Heart left ventricle (tissue), 16 donors: ENCODE measurements at regions of chr10 and their contacts with region 1.

Region 1: GRCh38 chr10:32445740-32446535 is at the start of gene CCDC7:
- DNase-seq: peak; percentile 87 to 93 (median 89)
- ATAC-seq: peak; percentile 92 to 99 (median 98)
- H3K4me3 ChIP-seq: peak within 1 kb of the TSS; percentile 43 to 91 (median 70)
- H3K27ac ChIP-seq: peak within 1 kb of the TSS; percentile 89 to 99 (median 96)
- H3K4me1 ChIP-seq: peaks cover 0 to 17% (median 2%) of the 10 kb centered on the region in 12 donors
- H3K27me3 ChIP-seq: no peaks in the 10 kb centered on the region
- CTCF ChIP-seq: peak; percentile 31 to 83 (median 62)
- POLR2A ChIP-seq: peak in 1 of 2 donors; percentile 62
- total RNA-seq, gene CCDC7: 6.6 to 41.3 (median 24.9) TPM

Region 2: DNA sequence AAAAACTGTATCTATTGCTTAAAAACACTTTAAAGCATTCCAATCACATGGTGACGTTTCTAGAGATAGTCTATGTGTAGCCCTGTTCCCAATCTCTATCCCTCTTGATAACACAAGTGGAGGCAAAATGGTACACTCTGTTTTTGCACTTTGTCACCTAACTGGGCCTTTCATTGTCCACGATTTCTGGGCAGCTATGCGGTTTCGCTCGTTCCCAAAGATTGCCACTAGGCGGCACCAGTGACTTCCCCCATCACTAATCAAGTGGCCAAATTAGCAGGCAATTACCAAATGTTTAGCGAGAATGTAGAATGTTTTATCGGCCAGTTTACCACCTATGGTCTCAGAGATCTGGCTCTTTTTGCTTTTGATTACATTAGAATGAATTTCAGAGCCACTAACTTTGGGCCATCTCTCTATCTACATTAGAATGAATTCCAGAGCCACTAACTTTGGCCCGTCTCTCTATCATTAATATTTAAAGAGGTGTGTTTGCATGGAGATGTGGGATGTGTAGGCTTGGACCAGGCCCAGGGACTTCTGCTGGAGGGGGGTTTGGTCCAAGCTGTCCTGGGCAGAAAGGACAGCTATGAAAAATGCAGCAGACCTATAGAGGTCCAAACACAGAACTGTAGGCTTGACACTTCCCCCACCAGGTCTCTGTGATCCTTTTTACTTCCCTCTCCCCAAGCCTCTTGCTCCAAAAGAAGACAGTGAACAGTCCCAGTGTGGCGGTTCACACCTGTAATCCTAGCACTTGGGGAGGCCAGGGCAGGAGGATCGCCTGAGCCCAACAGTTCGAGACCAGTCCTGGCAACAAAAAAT is 189.1 kb before region 1 on chr10:
- intact Hi-C with region 1: loop called in 5 of 10 experiments (anchors 2 to 10 kb)
- DNase-seq: peak; percentile 44 to 76 (median 58)
- ATAC-seq: peak; percentile 37 to 83 (median 68)
- H3K4me3 ChIP-seq: peak overlapping the region in 1 of 12 donors; percentile 20
- H3K27ac ChIP-seq: no peak overlapping the region
- H3K4me1 ChIP-seq: peaks cover 0 to 8% (median 0%) of the 10 kb centered on the region in 12 donors
- H3K27me3 ChIP-seq: no peaks in the 10 kb centered on the region
- CTCF ChIP-seq: peak; percentile 83 to 94 (median 87)
- POLR2A ChIP-seq: no peak

Region 3: DNA sequence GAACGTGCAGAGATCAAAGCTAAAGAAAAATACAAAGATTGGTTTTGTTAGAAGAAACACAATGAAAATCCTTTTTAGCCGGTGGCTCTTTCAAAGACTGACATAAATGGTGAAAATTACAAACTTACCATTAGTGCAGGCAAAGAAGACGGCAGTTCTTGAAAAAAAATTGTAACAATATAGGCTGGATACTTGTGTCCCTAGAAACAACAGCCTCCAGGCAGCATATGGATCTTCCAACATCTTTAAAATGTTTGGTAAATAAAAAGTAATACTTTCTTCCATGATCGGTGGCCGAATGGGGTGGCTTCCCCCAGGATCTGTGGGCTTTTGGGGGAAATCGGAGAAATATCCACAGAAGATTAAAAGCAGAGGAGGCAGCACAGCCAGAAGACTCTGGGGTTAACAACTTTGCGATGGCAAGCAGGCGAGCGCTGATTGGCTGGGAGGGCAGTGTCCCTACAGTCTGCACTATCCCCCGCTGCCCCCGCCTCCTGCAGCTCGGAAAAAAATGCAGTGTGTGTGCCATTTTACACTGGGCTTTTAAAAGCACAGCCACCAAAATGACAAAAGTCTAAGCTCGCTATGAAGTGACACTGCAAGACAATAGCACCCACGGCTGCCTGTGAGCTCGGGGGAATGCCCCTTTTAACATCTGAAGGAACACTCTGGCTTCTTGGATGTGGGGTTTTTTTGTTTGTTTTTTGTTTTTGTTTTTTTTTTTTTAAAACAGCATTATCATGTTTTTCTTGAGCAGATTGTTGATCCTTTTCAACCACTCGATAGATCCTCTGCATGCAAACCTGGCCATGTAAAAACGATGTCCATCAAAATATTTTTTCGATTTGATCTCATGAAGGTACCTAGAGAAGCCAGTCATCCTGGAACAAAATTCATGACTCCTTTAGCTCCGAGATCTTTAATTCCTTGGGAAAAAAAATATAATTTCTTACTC is 67.3 kb before region 1 on chr10:
- intact Hi-C with region 1: loop called (anchors 1 to 5 kb)
- DNase-seq: peak; percentile 95 to 97 (median 96)
- ATAC-seq: peak; percentile 99 to 100 (median 99)
- H3K4me3 ChIP-seq: peak overlapping the region; percentile 35 to 78 (median 69)
- H3K27ac ChIP-seq: peak overlapping the region; percentile 43 to 94 (median 82)
- H3K4me1 ChIP-seq: peaks cover 0 to 31% (median 17%) of the 10 kb centered on the region in 12 donors
- H3K27me3 ChIP-seq: no peaks in the 10 kb centered on the region
- CTCF ChIP-seq: no peak
- POLR2A ChIP-seq: peak in 1 of 2 donors; percentile 36

Region 4: DNA sequence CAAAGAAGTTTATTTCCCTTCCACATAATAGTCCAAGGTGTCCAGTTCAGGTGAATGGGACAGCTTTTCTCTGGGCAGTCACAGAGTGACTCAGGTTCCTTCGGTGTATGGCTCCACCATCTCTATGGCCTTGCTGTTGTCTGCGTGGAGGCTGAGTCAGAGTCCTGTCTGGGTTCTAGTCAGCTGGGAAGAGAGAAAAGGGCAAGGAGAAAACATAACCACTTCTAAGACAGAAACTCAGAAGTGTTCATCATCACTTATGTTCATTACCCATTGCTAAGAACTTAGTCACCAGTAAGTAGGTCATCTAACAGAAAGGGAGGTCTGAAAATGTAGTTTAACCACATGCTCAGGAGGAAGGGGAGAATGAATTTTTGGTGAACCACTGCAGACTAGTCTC is 32.4 kb before region 1 on chr10:
- intact Hi-C with region 1: loop called in 1 of 10 experiments (anchors 2 kb)
- DNase-seq: no peak
- ATAC-seq: peak in 1 of 4 donors; percentile 18
- H3K4me3 ChIP-seq: no peak overlapping the region
- H3K27ac ChIP-seq: peak overlapping the region in 3 of 12 donors; percentile 37 to 64 (median 60)
- H3K4me1 ChIP-seq: peaks cover 0 to 39% (median 15%) of the 10 kb centered on the region in 12 donors
- H3K27me3 ChIP-seq: no peaks in the 10 kb centered on the region
- CTCF ChIP-seq: no peak
- POLR2A ChIP-seq: no peak

Region 5: GRCh38 chr10:32943854-32944661 is 498.1 kb after region 1 on chr10:
- intact Hi-C with region 1: no loop called
- DNase-seq: peak in 2 of 5 donors; percentile 35 to 70
- ATAC-seq: peak in 3 of 4 donors; percentile 43 to 67 (median 60)
- H3K4me3 ChIP-seq: no peak overlapping the region
- H3K27ac ChIP-seq: peak overlapping the region in 10 of 12 donors; percentile 2 to 70 (median 28)
- H3K4me1 ChIP-seq: peaks cover 11 to 95% (median 80%) of the 10 kb centered on the region in 12 donors
- H3K27me3 ChIP-seq: no peaks in the 10 kb centered on the region
- CTCF ChIP-seq: no peak
- POLR2A ChIP-seq: no peak

Region 6: DNA sequence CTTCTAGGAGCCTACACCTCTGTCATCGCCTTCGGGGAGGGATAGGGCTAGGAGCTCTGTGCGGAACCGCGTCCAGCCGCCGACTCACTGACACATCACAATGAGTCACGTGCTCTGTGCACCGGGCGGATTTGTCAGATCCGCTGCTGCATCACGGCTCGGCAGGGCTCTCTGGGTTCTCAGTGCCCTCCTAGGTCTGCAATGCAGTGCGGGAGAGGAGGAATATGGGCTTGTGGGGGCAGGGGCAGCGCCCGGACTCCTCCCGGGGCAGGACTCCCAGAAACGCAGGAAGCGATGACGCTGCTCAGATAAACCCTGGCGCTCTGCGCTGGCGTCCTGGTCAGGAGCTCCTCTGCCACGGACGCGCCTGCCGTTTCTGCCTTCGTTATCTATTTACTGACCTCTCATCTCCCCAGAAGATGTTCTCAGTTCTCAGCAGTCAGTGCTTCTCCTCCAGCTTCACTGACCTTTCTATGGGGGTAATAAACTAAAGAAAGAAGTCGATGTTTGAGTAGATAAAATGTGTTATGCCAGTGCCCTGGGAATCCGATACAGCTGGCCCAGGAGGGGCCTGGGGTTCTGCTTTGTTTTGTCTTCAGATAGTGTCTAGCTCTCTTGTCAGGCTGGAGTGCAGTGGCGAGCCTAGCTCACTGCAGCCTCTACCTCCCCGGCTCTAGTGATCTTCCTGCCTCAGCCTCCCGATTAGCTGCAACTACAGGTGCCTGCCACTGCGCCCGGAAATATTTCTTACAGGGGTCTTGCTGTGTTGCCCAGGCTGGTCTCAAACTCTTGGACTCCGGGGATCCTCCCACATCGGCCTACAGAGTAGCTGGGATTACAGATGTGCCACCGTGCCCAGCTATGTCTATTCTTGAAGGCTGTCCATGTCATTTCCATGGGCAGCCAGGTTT is 534.9 kb after region 1 on chr10:
- intact Hi-C with region 1: loop called in 1 of 10 experiments (anchors 10 kb)
- DNase-seq: peak; percentile 87 to 95 (median 93)
- ATAC-seq: peak; percentile 93 to 98 (median 96)
- H3K4me3 ChIP-seq: peak overlapping the region; percentile 15 to 64 (median 58)
- H3K27ac ChIP-seq: peak overlapping the region; percentile 87 to 96 (median 92)
- H3K4me1 ChIP-seq: peaks cover 7 to 63% (median 28%) of the 10 kb centered on the region in 12 donors
- H3K27me3 ChIP-seq: no peaks in the 10 kb centered on the region
- CTCF ChIP-seq: peak in 1 of 12 donors; percentile 2
- POLR2A ChIP-seq: peak in 1 of 2 donors; percentile 72